ENCODE measurements at regions of chr13 and their contacts with region 1.

Region 1: GRCh38 chr13:92843549-92843948 is 383.1 kb upstream of the GPC6 start:
- DNase-seq: no peak
- H3K4me3 ChIP-seq: no peak overlapping the region
- H3K27ac ChIP-seq: no peak overlapping the region
- H3K4me1 ChIP-seq: peaks cover 0 to 20% of the 10 kb centered on the region in 2 donors
- H3K27me3 ChIP-seq: no peaks in the 10 kb centered on the region
- CTCF ChIP-seq: no peak

Region 2: DNA sequence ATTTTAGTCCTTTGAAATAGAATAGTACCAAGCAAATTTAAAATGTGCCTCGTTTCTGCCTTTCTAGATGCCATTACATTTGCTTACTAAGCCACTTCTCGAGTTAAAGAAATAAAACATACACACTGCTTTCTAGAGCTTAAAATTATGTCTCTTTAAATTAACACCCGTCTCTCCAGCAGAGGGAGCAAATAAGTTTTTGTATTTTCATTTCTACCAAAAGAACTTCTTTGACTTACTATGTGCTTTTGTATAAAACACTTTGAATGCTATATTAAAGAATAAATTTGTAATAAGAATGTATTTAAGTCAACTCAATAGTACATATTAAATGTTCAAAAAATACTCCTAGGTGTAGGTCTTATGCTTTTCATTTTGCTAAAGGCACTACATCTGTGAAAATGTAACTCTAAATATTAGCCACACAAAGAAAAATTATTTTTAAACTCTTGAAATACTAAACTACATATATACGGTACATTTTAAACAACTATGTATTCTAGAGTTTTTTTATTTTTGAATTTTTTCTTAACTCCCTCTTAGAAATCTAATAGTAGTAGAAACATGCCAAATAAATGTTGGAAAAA is 1765.4 kb before region 1 on chr13:
- intact Hi-C with region 1: no loop called
- DNase-seq: no peak
- H3K4me3 ChIP-seq: no peak overlapping the region
- H3K27ac ChIP-seq: no peak overlapping the region
- H3K4me1 ChIP-seq: no peaks in the 10 kb centered on the region
- H3K27me3 ChIP-seq: no peaks in the 10 kb centered on the region
- CTCF ChIP-seq: peak in 1 of 3 experiments; percentile 34

Region 3: DNA sequence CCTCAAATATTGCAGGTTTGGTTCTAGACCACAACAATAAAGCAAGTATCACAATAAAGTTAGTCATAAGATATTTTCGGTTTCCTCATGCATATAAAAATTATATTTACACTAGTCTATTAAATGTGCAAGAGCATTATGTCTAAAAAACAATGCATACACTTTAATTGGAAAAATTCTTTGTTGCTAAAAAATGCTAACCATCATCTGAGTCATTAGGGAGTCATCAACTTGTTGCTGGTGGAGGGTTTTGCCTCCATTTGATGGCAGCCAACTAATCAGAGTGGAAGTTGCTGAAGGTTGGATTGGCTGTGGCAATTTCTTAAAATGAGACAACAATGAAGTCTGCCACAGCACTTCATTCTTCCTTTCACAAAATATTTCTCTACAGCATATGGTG is 39.2 kb before region 1 on chr13:
- intact Hi-C with region 1: loop called (anchors 5 kb)
- DNase-seq: no peak
- H3K4me3 ChIP-seq: no peak overlapping the region
- H3K27ac ChIP-seq: no peak overlapping the region
- H3K4me1 ChIP-seq: peaks cover 3 to 20% of the 10 kb centered on the region in 2 donors
- H3K27me3 ChIP-seq: no peaks in the 10 kb centered on the region
- CTCF ChIP-seq: no peak

Measured in ascending aorta (tissue), 2 donors.